ENCODE measurements at regions of chr17 and their contacts with region 1.

Region 1: DNA sequence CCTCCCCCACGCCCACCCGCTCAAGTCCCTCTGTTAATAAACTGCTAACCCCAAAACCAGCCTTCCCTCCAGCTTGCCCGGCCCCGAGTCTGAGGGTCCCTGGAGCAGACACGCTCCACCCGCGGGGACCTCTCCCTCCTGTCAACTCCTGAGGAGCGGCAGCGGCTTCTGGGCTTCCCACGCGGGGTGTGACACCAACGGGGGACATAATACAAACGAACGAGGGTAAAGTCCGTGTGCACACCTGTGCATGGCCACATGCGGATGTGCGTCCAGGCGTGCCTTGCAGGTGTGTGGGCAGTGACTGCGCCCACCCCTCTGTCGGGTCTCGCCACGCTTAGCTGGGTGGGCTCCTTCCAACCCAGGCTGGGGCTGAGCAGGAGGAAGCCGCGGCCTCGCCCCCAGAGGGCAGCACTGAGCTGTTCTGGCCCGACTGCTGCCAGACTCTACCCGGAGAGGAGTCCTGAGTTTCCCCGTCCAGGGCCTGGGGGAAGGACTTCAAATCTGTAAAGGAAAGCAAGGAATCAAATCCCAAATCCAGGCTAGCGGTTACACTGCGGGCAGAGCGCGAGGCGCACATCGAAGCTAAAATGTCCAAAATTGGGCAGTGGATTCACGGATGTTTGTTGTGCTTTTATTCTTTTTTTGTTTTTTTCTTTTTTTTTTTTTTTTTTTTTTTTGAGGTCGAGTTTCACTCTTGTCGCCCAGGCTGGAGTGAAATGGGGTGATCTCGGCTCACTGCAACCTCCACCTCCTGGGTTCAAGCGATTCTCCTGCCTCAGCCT is 24.2 kb upstream of the KRT17 start:
- DNase-seq: peak; percentile 70 to 89 (median 78)
- H3K4me3 ChIP-seq: peak overlapping the region; percentile 12 to 67 (median 48)
- H3K27ac ChIP-seq: peak overlapping the region in 23 of 59 donors; percentile 13 to 76 (median 46)
- H3K27me3 ChIP-seq: no peaks in the 10 kb centered on the region
- CTCF ChIP-seq: peak; percentile 55 to 98 (median 93)

Region 2: DNA sequence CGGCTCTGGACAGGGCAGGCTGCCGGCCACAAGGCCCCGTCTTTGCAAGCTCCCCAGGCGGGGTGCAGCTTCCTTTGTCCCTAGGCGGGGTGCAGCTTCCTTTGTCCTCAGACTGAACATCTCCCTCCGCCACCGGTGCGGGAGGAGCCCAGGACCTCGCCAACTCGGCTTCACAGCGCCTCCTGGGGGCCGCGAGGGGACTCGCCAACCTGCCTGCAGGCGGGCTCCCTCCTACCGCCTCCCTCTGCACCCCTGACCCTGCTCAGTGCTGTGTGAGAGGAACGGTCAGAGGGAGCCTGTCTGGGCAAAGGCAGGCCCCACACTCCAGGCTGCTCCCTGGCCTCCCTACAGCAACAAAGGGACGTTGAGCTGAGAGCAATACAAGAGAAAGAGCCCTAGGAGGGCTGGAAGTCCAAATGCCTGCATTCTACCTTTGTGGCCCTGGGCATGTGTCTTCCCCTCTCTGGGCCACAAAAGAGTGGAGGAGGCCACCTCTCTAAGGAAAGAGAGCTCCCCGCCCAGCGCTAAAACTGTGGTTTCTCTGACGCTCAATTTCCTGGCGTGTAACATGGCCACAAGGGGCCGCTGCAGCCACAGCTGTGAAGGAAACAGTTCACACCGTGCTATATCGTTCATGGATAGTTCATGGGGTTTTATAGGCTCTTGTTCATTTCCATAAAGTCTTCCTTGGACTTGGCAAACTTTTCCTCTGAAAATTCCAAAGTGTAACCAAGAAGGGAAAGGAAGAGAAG is 99.6 kb before region 1 on chr17:
- intact Hi-C with region 1: loop called (anchors 1 kb)
- DNase-seq: peak; percentile 65 to 86 (median 80)
- H3K4me3 ChIP-seq: peak overlapping the region in 53 of 59 donors; percentile 1 to 67 (median 34)
- H3K27ac ChIP-seq: peak overlapping the region in 33 of 59 donors; percentile 0 to 82 (median 57)
- H3K27me3 ChIP-seq: peaks cover 0 to 8% (median 0%) of the 10 kb centered on the region in 45 donors
- CTCF ChIP-seq: peak; percentile 67 to 94 (median 84)

Region 3: DNA sequence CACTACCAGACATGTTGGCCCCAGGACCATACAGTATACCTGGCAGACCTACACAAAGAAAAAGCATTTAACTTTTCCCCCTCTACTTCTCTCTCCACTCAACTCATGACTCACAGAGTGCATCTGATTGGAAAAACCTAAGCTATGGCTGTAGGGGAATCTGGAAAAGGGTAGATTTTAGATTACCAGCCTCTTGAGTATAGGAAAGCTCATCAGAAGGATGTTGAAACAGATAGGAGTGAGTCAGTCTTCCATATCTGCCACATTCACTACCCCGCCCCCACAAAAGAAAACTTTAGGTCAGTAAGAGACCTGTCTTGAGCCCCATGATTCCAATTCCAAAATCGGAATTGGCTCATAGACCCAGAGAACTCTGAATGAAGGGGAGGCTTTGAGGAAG is 89.1 kb before region 1 on chr17:
- intact Hi-C with region 1: no loop called
- DNase-seq: no peak
- H3K4me3 ChIP-seq: no peak overlapping the region
- H3K27ac ChIP-seq: no peak overlapping the region
- H3K27me3 ChIP-seq: peaks cover 0 to 35% (median 0%) of the 10 kb centered on the region in 45 donors
- CTCF ChIP-seq: no peak

Region 4: GRCh38 chr17:41579484-41580243 is 68.9 kb before region 1 on chr17:
- intact Hi-C with region 1: loop called in 1 of 2 experiments (anchors 2 kb)
- DNase-seq: peak in 9 of 10 donors; percentile 5 to 65 (median 51)
- H3K4me3 ChIP-seq: no peak overlapping the region
- H3K27ac ChIP-seq: no peak overlapping the region
- H3K27me3 ChIP-seq: peaks cover 0 to 31% (median 8%) of the 10 kb centered on the region in 45 donors
- CTCF ChIP-seq: peak; percentile 31 to 75 (median 64)

Measured in dorsolateral prefrontal cortex (tissue), 120 donors.